A673 (cell line): ENCODE measurements at regions of chr20 and their contacts with region 1.

Region 1: DNA sequence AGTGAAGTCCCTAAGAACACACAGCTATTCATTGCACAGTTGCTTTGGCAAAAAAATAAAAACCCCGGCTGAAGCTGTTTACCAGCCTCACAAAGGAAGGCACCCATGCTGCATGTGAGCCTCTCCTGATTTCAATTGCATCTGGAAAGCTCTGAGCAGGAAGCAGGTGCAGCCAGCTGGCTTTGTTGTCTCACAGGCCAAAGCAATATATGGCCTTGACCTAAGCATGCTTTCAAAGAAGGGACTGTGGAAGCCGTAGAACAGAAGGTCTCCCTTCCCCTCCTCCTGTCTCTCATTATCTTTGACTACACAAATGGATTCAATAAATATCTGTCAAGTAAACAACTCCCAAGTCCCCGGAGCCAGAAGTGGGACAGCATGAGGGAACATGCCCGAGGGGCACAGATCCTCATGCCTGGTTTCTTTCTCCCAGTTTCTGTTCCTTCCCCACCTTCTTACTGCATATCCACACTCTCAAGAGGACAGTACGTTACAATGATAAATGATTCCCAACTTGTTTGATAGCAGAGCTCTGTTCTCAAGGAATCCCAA is 57.2 kb upstream of the PCSK2 start:
- DNase-seq: peak; percentile 58
- H3K4me3 ChIP-seq: no peak overlapping the region
- H3K27ac ChIP-seq: peak overlapping the region; percentile 99
- H3K4me1 ChIP-seq: peaks cover 84% of the 10 kb centered on the region
- H3K27me3 ChIP-seq: no peaks in the 10 kb centered on the region
- CTCF ChIP-seq: no peak

Region 2: DNA sequence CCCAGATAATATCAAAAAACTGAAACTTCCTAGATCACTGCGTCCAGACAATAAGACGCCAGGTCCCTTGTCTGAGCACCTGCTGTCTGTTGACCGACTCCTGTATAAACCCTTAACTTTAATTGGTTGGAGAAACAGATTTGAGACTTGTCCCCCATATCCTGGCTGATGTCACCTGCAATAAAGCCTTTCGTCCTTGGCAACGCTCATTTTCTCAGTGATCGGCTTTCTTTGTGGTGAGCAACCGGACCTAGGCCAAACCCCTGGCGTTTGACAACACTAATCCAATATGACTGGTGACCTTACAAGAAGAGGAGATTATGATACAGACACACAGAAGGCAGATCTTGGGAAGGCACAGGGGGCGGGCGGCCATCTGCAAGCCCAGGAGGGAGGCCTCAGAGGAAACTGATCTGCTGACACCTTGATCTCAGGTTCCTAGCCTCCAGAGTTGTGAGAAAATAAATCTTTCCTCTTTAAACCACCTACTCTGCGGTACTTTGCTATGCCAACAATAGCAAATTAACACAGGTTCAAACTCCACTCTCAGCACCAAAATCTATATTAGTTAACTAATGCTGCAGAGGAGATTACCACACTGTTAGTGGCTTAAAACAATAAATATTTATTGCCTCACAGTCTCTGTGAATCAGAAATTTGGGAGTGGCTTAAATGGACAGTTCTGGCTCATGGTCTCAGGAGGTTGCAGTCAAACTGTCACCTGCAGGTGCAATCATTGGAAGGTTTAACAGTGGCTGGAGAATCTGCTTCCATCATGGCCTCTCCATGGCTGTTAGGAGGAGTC is 242.8 kb before region 1 on chr20:
- CTCF ChIA-PET with region 1: no interaction called
- POLR2A ChIA-PET with region 1: no interaction called
- intact Hi-C with region 1: loop called (anchors 1 kb)
- DNase-seq: no peak
- H3K4me3 ChIP-seq: no peak overlapping the region
- H3K27ac ChIP-seq: peak overlapping the region; percentile 58
- H3K4me1 ChIP-seq: peaks cover 16% of the 10 kb centered on the region
- H3K27me3 ChIP-seq: no peaks in the 10 kb centered on the region
- CTCF ChIP-seq: no peak

Region 3: GRCh38 chr20:17227669-17228623 is 58.3 kb after region 1 on chr20:
- CTCF ChIA-PET with region 1: no interaction called
- POLR2A ChIA-PET with region 1: no interaction called
- intact Hi-C with region 1: loop called (anchors 2 kb)
- DNase-seq: peak; percentile 86
- H3K4me3 ChIP-seq: peak overlapping the region; percentile 78
- H3K27ac ChIP-seq: peak overlapping the region; percentile 79
- H3K4me1 ChIP-seq: peaks cover 29% of the 10 kb centered on the region
- H3K27me3 ChIP-seq: no peaks in the 10 kb centered on the region
- CTCF ChIP-seq: no peak

Region 4: DNA sequence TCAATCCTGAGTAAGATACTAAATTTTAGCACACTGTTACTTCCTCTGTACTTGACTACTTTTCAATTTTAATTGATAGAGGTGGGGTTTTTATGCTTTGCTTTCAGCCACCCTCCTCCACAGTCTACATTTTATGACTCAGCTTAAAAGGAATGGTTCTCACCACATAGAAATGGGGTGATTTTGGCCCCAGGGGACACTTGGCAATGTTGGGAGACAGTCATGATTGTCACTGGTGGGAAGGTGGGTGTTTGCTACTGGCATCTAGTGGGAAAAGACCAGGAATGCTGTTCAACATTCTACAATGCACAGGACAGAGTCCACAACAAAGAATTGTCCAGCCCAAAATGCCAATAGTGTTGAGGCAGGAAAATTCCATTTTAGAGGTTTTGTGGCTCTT is 128.5 kb after region 1 on chr20:
- CTCF ChIA-PET with region 1: no interaction called
- POLR2A ChIA-PET with region 1: no interaction called
- intact Hi-C with region 1: loop called (anchors 5 kb)
- DNase-seq: peak; percentile 76
- H3K4me3 ChIP-seq: no peak overlapping the region
- H3K27ac ChIP-seq: peak overlapping the region; percentile 34
- H3K4me1 ChIP-seq: peaks cover 53% of the 10 kb centered on the region
- H3K27me3 ChIP-seq: no peaks in the 10 kb centered on the region
- CTCF ChIP-seq: 0 out of 2 replicates have a peak, but pooled peaks have one; percentile 11

Region 5: DNA sequence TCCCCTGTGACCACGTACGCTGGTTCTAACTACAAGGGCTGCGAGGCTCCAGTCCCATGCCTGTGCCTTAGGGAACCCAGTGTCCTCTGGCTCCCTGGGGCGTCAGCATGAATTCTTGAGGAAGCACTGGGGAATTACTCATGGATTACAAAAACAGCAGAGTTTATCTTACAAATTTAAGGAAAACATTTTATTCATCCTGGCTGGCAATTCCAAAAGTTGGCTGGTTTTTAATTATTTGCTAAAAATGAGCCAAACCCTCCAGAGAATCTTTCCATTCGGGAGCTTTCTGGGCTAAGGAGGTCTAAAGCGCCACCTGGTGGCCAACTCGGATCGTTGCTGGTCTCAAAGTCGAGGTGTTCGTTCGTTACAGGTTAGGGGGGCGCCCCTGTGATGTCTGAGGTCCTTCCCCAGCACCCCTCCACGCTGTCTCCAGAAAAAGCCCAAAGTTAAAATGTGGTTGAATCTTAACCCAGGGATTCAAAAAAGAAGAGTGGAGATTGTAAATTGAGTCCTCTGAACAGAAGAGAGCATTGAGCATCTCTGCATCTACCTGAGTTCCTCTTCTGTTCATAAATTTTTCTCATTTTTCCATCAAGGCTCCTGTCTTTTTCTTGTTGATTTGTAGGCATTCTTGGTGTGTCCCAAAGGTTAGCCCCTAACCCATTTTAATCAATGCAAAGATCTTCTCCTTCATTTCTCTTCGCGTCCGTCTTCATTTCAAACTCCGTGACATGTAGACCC is 262.1 kb after region 1 on chr20:
- CTCF ChIA-PET with region 1: no interaction called
- POLR2A ChIA-PET with region 1: no interaction called
- intact Hi-C with region 1: loop called (anchors 2 kb)
- DNase-seq: peak; percentile 81
- H3K4me3 ChIP-seq: no peak overlapping the region
- H3K27ac ChIP-seq: peak overlapping the region; percentile 51
- H3K4me1 ChIP-seq: peaks cover 42% of the 10 kb centered on the region
- H3K27me3 ChIP-seq: no peaks in the 10 kb centered on the region
- CTCF ChIP-seq: peak; percentile 96